Common myeloid progenitor, CD34-positive (primary cell): ENCODE measurements at regions of chr1 and their contacts with region 1.

Region 1: DNA sequence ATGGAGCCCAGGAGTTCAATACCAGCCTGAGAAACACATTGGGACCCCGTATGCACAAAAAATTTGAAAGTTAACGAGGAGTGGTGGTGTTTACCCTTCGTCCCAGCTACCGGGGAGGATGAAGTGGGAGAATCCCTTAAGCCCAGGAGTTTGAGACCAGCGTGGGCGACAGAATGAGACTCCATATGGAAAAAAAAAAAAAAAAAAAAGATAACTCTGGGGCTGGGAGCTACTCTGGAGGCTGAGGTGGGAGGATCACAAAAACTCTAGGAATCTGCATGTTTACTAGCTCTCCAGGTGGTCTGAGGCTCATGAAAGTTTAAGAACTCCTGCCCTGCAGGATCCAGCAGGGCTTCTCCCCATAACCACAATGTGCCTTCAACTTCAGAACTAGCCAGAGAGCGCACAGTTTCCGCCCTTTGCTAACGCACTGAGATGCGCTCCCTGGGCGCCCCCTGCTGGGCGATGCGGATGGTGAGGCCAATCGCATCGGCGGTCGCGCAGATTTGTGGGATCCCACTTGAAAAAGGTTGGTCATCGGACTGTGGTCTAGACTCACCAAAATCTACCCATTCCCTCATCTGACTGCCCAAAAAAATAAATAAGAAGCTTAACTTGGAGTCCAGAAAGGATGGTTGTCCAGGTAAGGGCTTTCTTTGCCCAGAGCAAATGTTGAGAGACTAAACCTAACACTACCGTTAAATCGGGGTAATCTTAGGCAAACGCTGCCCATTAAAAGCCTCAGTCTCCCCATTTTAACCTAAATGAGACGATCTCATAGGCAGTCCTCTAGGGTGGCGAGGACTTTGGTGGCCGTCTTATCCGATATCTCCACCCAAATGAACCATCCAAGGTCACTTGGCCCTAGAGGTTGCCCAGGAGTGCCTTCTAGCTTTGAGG is 8.8 kb downstream of the ZNF683 start:
- DNase-seq: peak; percentile 85 to 95 (median 94)
- H3K4me3 ChIP-seq: no peak overlapping the region
- H3K27ac ChIP-seq: no peak overlapping the region
- H3K4me1 ChIP-seq: peaks cover 0 to 40% (median 35%) of the 10 kb centered on the region in 4 experiments
- H3K27me3 ChIP-seq: peaks cover 0 to 32% (median 11%) of the 10 kb centered on the region in 5 experiments

Region 2: GRCh38 chr1:26156704-26157038 is 207.1 kb before region 1 on chr1:
- CTCF ChIA-PET with region 1: no interaction called
- POLR2A ChIA-PET with region 1: no interaction called
- DNase-seq: peak in 2 of 3 donors; percentile 57 to 74
- H3K4me3 ChIP-seq: peak overlapping the region in 4 of 7 experiments; percentile 4 to 49 (median 12)
- H3K27ac ChIP-seq: no peak overlapping the region
- H3K4me1 ChIP-seq: peaks cover 0 to 55% (median 46%) of the 10 kb centered on the region in 4 experiments
- H3K27me3 ChIP-seq: peaks cover 0 to 30% (median 6%) of the 10 kb centered on the region in 5 experiments

Region 3: GRCh38 chr1:26349188-26349876 is 14.5 kb before region 1 on chr1:
- CTCF ChIA-PET with region 1: interaction called, 16 read pairs
- POLR2A ChIA-PET with region 1: no interaction called
- DNase-seq: no peak
- H3K4me3 ChIP-seq: no peak overlapping the region
- H3K27ac ChIP-seq: no peak overlapping the region
- H3K4me1 ChIP-seq: peaks cover 0 to 5% (median 0%) of the 10 kb centered on the region in 4 experiments
- H3K27me3 ChIP-seq: no peaks in the 10 kb centered on the region

Region 4: GRCh38 chr1:26378088-26378878 is 14.5 kb after region 1 on chr1:
- CTCF ChIA-PET with region 1: interaction called, 29 read pairs
- POLR2A ChIA-PET with region 1: interaction called, 3 read pairs
- DNase-seq: peak; percentile 70 to 96 (median 94)
- H3K4me3 ChIP-seq: peak overlapping the region in 3 of 7 experiments; percentile 6 to 50 (median 30)
- H3K27ac ChIP-seq: peak overlapping the region in 1 of 2 experiments; percentile 54
- H3K4me1 ChIP-seq: peaks cover 15 to 58% (median 45%) of the 10 kb centered on the region in 4 experiments
- H3K27me3 ChIP-seq: no peaks in the 10 kb centered on the region

Region 5: DNA sequence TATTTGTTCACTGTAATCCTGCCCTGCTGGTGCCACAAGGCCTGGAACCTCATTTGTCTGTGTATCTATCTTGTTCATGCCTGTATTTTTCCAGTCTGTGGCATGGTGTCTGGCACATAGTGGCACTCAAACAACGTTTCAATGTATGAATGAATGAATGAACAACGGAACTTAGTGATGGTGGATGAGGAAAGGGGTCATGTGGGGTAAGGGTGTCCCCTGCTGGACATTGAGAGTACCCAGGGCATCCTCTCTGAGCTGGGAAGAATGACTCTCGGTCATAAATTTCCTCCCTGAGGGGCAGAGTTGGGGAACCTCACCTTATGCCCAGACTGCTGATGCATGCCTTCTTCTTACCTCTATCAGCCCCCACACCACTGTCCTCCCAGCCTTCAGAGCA is 27.7 kb after region 1 on chr1:
- CTCF ChIA-PET with region 1: interaction called, 20 read pairs
- POLR2A ChIA-PET with region 1: no interaction called
- DNase-seq: peak; percentile 60 to 84 (median 79)
- H3K4me3 ChIP-seq: no peak overlapping the region
- H3K27ac ChIP-seq: no peak overlapping the region
- H3K4me1 ChIP-seq: peaks cover 0 to 29% (median 0%) of the 10 kb centered on the region in 4 experiments
- H3K27me3 ChIP-seq: no peaks in the 10 kb centered on the region

Region 6: GRCh38 chr1:26417111-26417759 is 53.4 kb after region 1 on chr1:
- CTCF ChIA-PET with region 1: interaction called, 17 read pairs
- POLR2A ChIA-PET with region 1: no interaction called
- DNase-seq: peak; percentile 77 to 85 (median 81)
- H3K4me3 ChIP-seq: no peak overlapping the region
- H3K27ac ChIP-seq: no peak overlapping the region
- H3K4me1 ChIP-seq: peaks cover 0 to 3% (median 2%) of the 10 kb centered on the region in 4 experiments
- H3K27me3 ChIP-seq: peaks cover 8 to 46% (median 20%) of the 10 kb centered on the region in 5 experiments

Region 7: GRCh38 chr1:26472901-26473845 is 109.4 kb after region 1 on chr1:
- CTCF ChIA-PET with region 1: no interaction called
- POLR2A ChIA-PET with region 1: no interaction called
- DNase-seq: peak; percentile 92 to 96 (median 95)
- H3K4me3 ChIP-seq: peak overlapping the region; percentile 70 to 99 (median 88)
- H3K27ac ChIP-seq: peak overlapping the region; percentile 70 to 89
- H3K4me1 ChIP-seq: peaks cover 16 to 42% (median 36%) of the 10 kb centered on the region in 4 experiments
- H3K27me3 ChIP-seq: no peaks in the 10 kb centered on the region